ENCODE measurements at regions of chr10 and their contacts with region 1.

Region 1: GRCh38 chr10:124802313-124802675 is 675 bp downstream of the ABRAXAS2 start:
- DNase-seq: peak in 4 of 35 experiments; percentile 4 to 24 (median 7)
- ATAC-seq: no peak
- H3K4me3 ChIP-seq: peak overlapping the region; percentile 69 to 97
- H3K4me3 Mint-ChIP-seq: peak overlapping the region; percentile 85 to 88 (median 85)
- H3K27ac ChIP-seq: no peak overlapping the region
- H3K27ac Mint-ChIP-seq: peak overlapping the region; percentile 61 to 84
- H3K4me1 ChIP-seq: peaks cover 9 to 12% of the 10 kb centered on the region in 2 experiments
- H3K4me1 Mint-ChIP-seq: peaks cover 9 to 22% (median 18%) of the 10 kb centered on the region in 3 donors
- H3K27me3 ChIP-seq: peaks cover 0 to 4% of the 10 kb centered on the region in 2 experiments
- H3K27me3 Mint-ChIP-seq: peaks cover 0 to 4% of the 10 kb centered on the region in 2 donors

Region 2: DNA sequence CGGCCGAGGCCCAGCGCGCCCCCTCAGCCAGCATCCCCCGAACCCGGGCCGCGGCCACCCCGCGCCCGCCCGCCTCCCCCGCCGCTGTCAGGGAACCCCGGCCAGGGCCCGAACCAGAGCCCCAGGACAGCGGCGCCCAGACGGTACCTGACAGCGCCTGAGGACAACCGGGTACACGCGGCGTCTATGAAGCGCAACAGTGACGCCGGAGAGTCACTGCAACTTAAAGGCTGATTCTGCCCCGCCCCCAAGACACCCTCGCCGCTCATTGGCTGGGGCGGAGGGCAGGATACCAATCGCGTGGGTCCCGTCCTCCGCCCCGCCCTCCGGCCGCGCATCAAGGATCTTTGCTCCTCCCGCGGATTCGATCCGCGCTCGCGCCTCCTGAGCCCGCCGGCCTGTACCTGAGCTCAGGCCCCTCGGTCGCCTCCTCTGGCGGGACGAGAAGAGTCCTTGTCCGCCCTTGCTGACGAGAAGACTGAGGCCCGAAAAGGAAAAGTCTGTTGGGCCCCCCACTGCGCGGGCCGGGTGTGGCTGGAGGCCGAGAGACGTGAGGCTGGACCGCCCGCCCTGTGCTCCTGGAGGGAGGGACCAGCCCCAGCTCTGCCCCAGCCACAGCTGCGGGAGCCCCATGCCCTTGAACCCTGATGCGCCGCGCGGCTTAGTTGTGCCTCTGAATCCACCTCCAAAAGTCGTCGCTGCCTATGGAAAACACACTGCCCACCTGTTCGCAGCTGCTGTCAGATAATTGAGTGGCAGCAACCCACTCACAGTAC is 383.4 kb before region 1 on chr10 and contains the start of gene OAT:
- CTCF ChIA-PET with region 1: no interaction called
- POLR2A ChIA-PET with region 1: interaction called in 1 of 2 experiments, 10 read pairs
- DNase-seq: peak; percentile 90 to 98 (median 96)
- ATAC-seq: peak; percentile 95 to 98 (median 96)
- H3K4me3 ChIP-seq: peak within 1 kb of the TSS; percentile 55 to 66
- H3K4me3 Mint-ChIP-seq: peak within 1 kb of the TSS; percentile 76 to 82 (median 77)
- H3K27ac ChIP-seq: peak within 1 kb of the TSS; percentile 15
- H3K27ac Mint-ChIP-seq: peak within 1 kb of the TSS; percentile 43 to 73
- H3K4me1 ChIP-seq: peaks cover 5 to 14% of the 10 kb centered on the region in 2 experiments
- H3K4me1 Mint-ChIP-seq: peaks cover 30 to 36% (median 30%) of the 10 kb centered on the region in 3 donors
- H3K27me3 ChIP-seq: peaks cover 0 to 17% of the 10 kb centered on the region in 2 experiments
- H3K27me3 Mint-ChIP-seq: peaks cover 3 to 7% of the 10 kb centered on the region in 2 donors
- total RNA-seq, gene OAT: 23.2 to 42.5 (median 38.1) TPM

Region 3: GRCh38 chr10:124755581-124755980 is 46.7 kb before region 1 on chr10:
- CTCF ChIA-PET with region 1: interaction called in 1 of 2 experiments, 6 read pairs
- POLR2A ChIA-PET with region 1: interaction called in 1 of 2 experiments, 12 read pairs
- DNase-seq: no peak
- ATAC-seq: no peak
- H3K4me3 ChIP-seq: no peak overlapping the region
- H3K4me3 Mint-ChIP-seq: no peak overlapping the region
- H3K27ac ChIP-seq: no peak overlapping the region
- H3K27ac Mint-ChIP-seq: no peak overlapping the region
- H3K4me1 ChIP-seq: no peaks in the 10 kb centered on the region
- H3K4me1 Mint-ChIP-seq: peaks cover 0 to 2% (median 2%) of the 10 kb centered on the region in 3 donors
- H3K27me3 ChIP-seq: no peaks in the 10 kb centered on the region
- H3K27me3 Mint-ChIP-seq: no peaks in the 10 kb centered on the region